ENCODE measurements at regions of chr3 and their contacts with region 1.

Region 1: DNA sequence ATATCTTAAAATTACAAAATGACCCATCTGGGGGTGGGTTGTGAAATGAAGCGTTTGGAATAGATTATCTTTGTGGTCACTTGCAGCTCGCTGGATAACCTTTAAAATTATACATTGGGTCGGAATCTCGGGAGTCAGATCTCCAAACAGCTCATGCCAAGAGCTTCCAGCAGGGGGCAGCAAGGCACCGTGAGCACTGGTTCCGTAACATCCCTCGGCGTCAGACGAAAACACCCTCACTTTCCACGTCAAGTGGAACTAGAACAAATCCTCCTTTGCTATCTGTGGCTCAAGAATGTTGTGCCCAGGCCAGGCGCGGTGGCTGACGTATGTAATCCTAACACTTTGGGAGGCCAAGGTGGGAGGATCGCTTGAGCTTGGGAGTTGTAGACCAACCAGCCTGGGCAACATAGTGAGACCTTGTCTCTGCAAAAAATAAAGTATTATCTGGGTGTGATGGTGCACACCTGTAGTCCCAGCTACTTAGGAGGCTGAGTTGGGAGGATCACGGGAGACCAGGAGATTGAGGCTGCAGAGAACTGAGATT is 31.1 kb downstream of the UMPS start:
- DNase-seq: peak; percentile 84 to 92 (median 87)
- ATAC-seq: peak; percentile 90 to 93 (median 92)
- H3K4me3 ChIP-seq: peak overlapping the region in 1 of 12 donors; percentile 18
- H3K27ac ChIP-seq: peak overlapping the region in 9 of 12 donors; percentile 12 to 73 (median 51)
- H3K4me1 ChIP-seq: peaks cover 0 to 18% (median 9%) of the 10 kb centered on the region in 12 donors
- H3K27me3 ChIP-seq: no peaks in the 10 kb centered on the region
- CTCF ChIP-seq: peak; percentile 95 to 98 (median 97)
- POLR2A ChIP-seq: peak in 1 of 2 donors; percentile 24

Region 2: GRCh38 chr3:124895756-124896155 is 134.4 kb after region 1 on chr3:
- intact Hi-C with region 1: loop called in 3 of 10 experiments (anchors 2 kb)
- DNase-seq: no peak
- ATAC-seq: peak in 3 of 4 donors; percentile 55 to 60 (median 56)
- H3K4me3 ChIP-seq: no peak overlapping the region
- H3K27ac ChIP-seq: no peak overlapping the region
- H3K4me1 ChIP-seq: peaks cover 0 to 20% (median 6%) of the 10 kb centered on the region in 12 donors
- H3K27me3 ChIP-seq: no peaks in the 10 kb centered on the region
- CTCF ChIP-seq: no peak
- POLR2A ChIP-seq: no peak

Region 3: DNA sequence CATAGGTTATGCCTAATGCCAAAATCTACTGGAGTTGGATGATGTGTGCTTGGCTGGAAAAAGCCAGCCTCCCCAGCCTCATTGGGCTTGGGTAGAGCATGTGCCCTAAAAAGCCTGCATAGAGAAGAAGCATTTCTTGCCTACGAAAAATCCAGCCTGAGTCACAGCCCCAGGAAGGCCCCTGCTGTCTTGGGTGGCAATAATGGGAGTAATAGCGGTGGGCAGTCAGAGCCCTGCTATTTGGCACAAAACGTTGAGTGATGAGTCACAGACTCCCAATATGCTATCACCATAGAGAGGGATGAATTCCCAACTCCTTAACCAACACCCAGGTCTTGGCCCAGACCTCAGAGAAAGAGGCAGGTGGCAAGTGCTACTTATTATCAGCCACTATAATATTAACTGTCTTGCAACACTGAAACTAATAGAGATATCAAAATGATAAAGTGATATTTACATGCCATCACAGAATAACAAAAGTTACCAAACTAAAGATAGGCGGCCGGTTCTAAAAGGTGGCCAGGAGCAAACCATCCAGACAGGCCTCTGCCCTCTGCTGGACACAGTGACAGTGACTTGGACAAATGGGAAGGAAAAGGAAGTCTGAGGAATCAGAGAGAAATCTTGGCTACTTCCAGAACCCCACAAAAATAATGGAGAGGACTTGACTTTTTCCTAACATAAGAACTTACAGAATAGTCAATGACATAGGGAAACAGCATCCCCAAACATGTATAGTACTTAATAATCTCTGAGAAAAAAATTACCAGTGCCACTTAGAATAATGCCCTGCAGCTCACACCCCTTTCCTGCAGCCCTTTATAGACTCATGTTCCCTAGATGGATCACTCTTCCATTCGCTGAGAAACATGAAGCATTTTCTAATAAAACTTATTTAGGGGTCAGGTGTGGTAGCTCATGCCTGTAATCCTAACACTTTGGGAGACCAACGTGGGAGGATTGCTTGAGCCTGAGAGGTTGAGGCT is 225.1 kb after region 1 on chr3:
- intact Hi-C with region 1: loop called in 2 of 10 experiments (anchors 5 kb)
- DNase-seq: peak in 1 of 5 donors; percentile 38
- ATAC-seq: peak in 3 of 4 donors; percentile 38 to 59 (median 47)
- H3K4me3 ChIP-seq: no peak overlapping the region
- H3K27ac ChIP-seq: peak overlapping the region in 11 of 12 donors; percentile 17 to 83 (median 55)
- H3K4me1 ChIP-seq: peaks cover 4 to 48% (median 22%) of the 10 kb centered on the region in 12 donors
- H3K27me3 ChIP-seq: no peaks in the 10 kb centered on the region
- CTCF ChIP-seq: peak; percentile 16 to 57 (median 36)
- POLR2A ChIP-seq: no peak

Measured in heart left ventricle (tissue), 16 donors.